CD8-positive, alpha-beta T cell (primary cell): ENCODE measurements at regions of chr22 and their contacts with region 1.

Region 1: GRCh38 chr22:39090426-39091064 is 6.5 kb upstream of the APOBEC3H start:
- DNase-seq: peak; percentile 74 to 96 (median 87)
- ATAC-seq: peak; percentile 72
- H3K4me3 ChIP-seq: peak overlapping the region; percentile 26 to 42
- H3K4me3 Mint-ChIP-seq: peak overlapping the region; percentile 69
- H3K27ac ChIP-seq: peak overlapping the region; percentile 68 to 95
- H3K27ac Mint-ChIP-seq: peak overlapping the region; percentile 92
- H3K4me1 ChIP-seq: peaks cover 69% of the 10 kb centered on the region
- H3K4me1 Mint-ChIP-seq: peaks cover 77% of the 10 kb centered on the region
- H3K27me3 ChIP-seq: no peaks in the 10 kb centered on the region
- H3K27me3 Mint-ChIP-seq: no peaks in the 10 kb centered on the region
- CTCF ChIP-seq: no peak

Region 2: GRCh38 chr22:39039306-39040126 is 51.0 kb before region 1 on chr22:
- CTCF ChIA-PET with region 1: interaction called, 3 read pairs
- POLR2A ChIA-PET with region 1: no interaction called
- intact Hi-C with region 1: loop called in 1 of 2 experiments (anchors 5 kb)
- DNase-seq: no peak
- ATAC-seq: no peak
- H3K4me3 ChIP-seq: peak overlapping the region in 1 of 2 experiments; percentile 65
- H3K4me3 Mint-ChIP-seq: peak overlapping the region; percentile 86
- H3K27ac ChIP-seq: peak overlapping the region in 1 of 2 experiments; percentile 54
- H3K27ac Mint-ChIP-seq: peak overlapping the region; percentile 93
- H3K4me1 ChIP-seq: peaks cover 18% of the 10 kb centered on the region
- H3K4me1 Mint-ChIP-seq: peaks cover 43% of the 10 kb centered on the region
- H3K27me3 ChIP-seq: no peaks in the 10 kb centered on the region
- H3K27me3 Mint-ChIP-seq: no peaks in the 10 kb centered on the region
- CTCF ChIP-seq: no peak

Region 3: GRCh38 chr22:39080052-39080762 is 10.3 kb before region 1 on chr22:
- CTCF ChIA-PET with region 1: interaction called, 3 read pairs
- POLR2A ChIA-PET with region 1: interaction called, 6 read pairs
- intact Hi-C with region 1: loop called in 1 of 2 experiments (anchors 1 kb)
- DNase-seq: peak in 5 of 9 experiments; percentile 40 to 85 (median 69)
- ATAC-seq: peak; percentile 17
- H3K4me3 ChIP-seq: peak overlapping the region in 1 of 2 experiments; percentile 83
- H3K4me3 Mint-ChIP-seq: peak overlapping the region; percentile 59
- H3K27ac ChIP-seq: peak overlapping the region in 1 of 2 experiments; percentile 90
- H3K27ac Mint-ChIP-seq: peak overlapping the region; percentile 88
- H3K4me1 ChIP-seq: peaks cover 51% of the 10 kb centered on the region
- H3K4me1 Mint-ChIP-seq: peaks cover 54% of the 10 kb centered on the region
- H3K27me3 ChIP-seq: no peaks in the 10 kb centered on the region
- H3K27me3 Mint-ChIP-seq: no peaks in the 10 kb centered on the region
- CTCF ChIP-seq: no peak